Psoas muscle (tissue), 8 donors: ENCODE measurements at regions of chr15 and their contacts with region 1.

Region 1: DNA sequence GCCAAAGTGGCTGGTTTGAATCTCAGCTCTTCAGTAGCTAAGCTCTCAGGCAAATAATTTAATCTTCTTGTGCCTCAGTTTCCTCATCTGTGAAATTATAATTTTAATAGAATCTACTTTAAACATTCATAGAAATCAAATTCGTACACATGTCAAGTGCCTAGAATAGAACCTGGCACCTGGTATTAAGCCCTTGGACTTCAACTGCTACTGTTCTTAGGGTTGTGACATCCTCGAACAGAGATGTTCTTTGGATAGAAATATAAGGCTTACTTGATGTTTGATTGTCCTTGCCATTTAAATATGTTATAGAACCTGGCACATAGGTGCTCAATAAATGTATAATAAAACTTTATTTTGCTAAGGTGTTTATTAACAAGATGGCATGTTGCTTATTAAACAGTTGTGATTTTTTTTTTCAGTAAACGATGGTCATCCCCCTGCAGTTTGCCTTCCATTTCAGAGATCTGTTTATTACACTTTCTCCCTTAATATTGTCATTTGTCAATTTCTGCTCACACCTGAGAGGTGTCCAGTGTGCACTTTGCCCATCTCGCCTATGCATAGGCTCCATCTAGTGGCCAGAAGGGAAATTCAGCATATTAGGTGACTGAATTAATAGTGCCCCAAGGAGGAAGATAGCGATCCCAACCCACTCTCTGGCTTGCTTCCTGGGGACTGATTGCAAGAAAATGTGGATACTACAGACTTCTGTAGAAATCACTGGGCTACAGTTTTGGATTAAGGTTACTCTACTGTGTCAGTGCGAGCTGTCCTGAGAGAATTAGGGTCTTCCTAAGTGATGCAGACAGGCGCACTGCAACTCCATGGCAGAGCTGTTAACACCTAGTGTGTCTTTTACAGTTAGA is 10.7 kb downstream of the IGF1R start:
- DNase-seq: no peak
- ATAC-seq: peak; percentile 72 to 88 (median 82)
- H3K4me3 ChIP-seq: no peak overlapping the region
- H3K27ac ChIP-seq: no peak overlapping the region
- H3K4me1 ChIP-seq: peaks cover 49% of the 10 kb centered on the region
- H3K27me3 ChIP-seq: no peaks in the 10 kb centered on the region
- CTCF ChIP-seq: peak; percentile 86

Region 2: GRCh38 chr15:99068186-99068585 is 409.1 kb after region 1 on chr15:
- intact Hi-C with region 1: loop called in 1 of 2 experiments (anchors 10 kb)
- DNase-seq: no peak
- ATAC-seq: no peak
- H3K4me3 ChIP-seq: no peak overlapping the region
- H3K27ac ChIP-seq: no peak overlapping the region
- H3K4me1 ChIP-seq: no peaks in the 10 kb centered on the region
- H3K27me3 ChIP-seq: no peaks in the 10 kb centered on the region
- CTCF ChIP-seq: no peak

Region 3: DNA sequence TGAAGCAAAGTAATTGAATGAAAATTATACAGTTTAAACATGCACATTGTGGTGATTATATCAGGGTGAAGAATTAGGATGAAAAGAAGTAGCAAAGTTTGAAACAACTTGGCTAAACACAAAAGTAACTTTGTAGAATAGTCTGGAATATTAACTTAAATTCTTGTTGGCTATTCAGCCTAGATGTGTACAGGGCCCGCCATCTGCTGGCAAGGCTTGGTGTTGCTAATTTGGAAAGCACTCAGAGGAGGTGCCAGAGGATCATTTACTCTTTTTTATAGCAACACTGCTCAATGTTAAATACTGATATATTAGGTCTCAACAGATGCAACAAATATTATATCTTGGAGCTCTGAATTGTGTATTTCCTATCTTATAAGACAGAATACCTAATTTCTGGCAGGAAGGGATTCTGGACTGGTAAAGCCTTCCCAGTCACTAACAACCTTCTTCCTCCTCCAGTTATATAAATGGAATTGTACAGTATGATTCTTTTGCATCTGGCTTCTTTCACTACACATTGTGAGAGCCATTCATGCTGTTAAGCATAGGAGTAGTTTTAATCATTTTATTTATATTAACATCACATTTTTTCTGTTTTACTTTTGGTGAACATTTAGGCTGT is 554.2 kb after region 1 on chr15:
- intact Hi-C with region 1: loop called in 1 of 2 experiments (anchors 10 kb)
- DNase-seq: peak; percentile 81 to 88
- ATAC-seq: peak; percentile 82 to 91 (median 83)
- H3K4me3 ChIP-seq: no peak overlapping the region
- H3K27ac ChIP-seq: peak overlapping the region; percentile 75
- H3K4me1 ChIP-seq: peaks cover 17% of the 10 kb centered on the region
- H3K27me3 ChIP-seq: no peaks in the 10 kb centered on the region
- CTCF ChIP-seq: peak; percentile 96